ENCODE measurements at regions of chr3 and their contacts with region 1.

Region 1: DNA sequence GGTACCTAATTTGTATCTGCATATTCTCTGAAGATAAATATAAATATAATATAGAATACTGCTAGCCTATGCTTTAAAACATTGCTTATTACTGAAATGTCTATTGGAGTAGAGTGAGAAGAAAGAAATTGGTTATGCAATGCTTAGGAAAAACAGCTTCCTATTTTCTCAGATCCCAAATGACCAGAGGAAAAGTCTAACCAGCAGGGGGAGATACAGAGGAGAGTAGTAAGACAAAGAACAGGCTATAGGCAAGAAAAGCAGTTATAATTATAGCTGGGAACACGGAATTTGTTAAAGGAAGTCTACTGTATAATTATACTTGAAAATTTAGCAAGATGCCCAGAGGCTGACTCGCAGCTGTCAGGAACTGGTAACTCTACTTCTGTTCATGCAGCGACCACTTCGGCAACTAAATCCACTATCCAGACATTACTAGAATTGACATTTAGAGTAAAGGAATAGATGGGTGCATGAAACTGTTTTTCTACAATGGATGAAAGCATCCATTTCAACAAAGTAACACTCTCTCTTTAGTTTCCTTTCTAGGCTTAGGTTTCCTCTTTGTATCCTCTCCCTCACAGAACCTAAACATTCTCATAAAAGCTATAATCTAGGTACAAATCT is 97.2 kb downstream of the TBC1D5 start:
- H3K4me3 ChIP-seq: no peak overlapping the region
- H3K27ac ChIP-seq: no peak overlapping the region
- H3K4me1 ChIP-seq: no peaks in the 10 kb centered on the region
- CTCF ChIP-seq: peak; percentile 43; the same call in 1 of the 2 replicates

Region 2: GRCh38 chr3:17442332-17443049 is 202.7 kb before region 1 on chr3:
- CTCF ChIA-PET with region 1: interaction called, 10 read pairs
- POLR2A ChIA-PET with region 1: no interaction called
- H3K4me3 ChIP-seq: no peak overlapping the region
- H3K27ac ChIP-seq: no peak overlapping the region
- H3K4me1 ChIP-seq: no peaks in the 10 kb centered on the region
- CTCF ChIP-seq: no peak

Region 3: GRCh38 chr3:17655743-17656142 is 10.6 kb after region 1 on chr3:
- CTCF ChIA-PET with region 1: interaction called, 15 read pairs
- POLR2A ChIA-PET with region 1: no interaction called
- H3K4me3 ChIP-seq: no peak overlapping the region
- H3K27ac ChIP-seq: no peak overlapping the region
- H3K4me1 ChIP-seq: no peaks in the 10 kb centered on the region
- CTCF ChIP-seq: no peak

Region 4: DNA sequence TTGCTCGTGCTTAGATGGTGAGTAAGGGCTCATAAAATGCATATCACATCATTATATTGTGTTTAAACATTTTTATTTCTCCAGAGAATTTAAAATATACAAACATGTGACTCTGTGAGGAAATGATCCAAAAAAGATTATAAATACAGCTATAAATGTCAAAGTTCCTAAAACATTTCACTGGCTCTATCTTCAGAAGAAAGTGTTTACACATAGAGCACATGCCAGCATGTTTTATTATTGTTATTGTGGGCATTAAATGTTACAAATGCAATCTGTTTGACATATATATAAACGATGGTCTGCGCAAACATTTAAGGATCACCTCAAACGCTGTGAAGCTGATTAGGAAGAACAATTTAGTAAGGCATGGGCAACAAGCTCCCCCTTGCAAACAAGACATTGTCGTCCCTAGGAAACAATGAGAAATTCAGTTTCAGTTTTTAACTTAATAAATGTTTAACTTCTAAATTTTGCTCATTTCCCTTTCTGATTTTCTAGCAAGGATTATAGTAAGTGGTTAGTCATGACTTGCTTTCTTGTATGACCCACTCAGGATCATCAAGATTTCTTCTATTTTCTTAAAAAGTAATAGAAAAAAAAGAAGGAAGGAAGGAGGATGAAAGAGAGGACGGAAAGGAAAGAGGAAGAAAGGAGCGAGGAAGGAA is 572.5 kb after region 1 on chr3:
- CTCF ChIA-PET with region 1: no interaction called
- POLR2A ChIA-PET with region 1: no interaction called
- H3K4me3 ChIP-seq: no peak overlapping the region
- H3K27ac ChIP-seq: no peak overlapping the region
- H3K4me1 ChIP-seq: no peaks in the 10 kb centered on the region
- CTCF ChIP-seq: no peak